ENCODE measurements at regions of chr11 and their contacts with region 1.

Region 1: DNA sequence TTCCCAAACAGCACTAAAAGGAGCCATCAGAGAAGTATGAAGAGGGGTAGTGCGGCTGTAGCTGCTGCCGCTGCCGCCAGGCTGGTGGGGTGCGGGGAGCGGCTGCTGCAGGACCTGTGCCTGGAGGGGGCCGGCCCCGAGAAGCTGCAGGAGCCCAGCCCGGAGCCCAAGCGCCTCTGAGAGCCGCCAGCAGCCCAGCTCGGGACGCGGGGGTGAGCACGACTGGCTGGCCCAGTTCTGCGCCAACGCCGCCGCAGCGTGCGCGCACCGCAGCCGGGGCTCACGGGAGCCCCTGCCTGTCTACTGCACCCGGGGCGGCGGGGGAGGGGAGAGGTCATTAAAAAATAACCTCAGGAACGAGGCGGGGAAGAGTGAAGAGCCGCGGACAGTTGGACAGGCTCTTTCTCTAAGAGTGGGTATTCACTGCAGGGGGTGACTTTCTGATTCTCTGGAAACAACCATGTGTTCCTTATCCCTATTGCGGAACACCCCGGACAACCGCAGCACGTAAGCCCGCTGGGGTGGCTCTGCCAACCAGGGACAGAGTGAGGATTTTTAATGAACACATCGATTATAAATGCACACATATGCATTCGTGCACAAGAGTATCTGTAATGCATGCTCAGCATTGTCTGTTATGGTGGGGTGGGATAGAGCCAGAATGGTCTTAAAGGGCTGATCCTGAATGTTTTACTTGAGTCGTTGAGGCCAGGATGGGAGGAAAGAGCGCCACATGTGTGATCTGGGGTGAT is 453 bp downstream of the GAS2 start:
- DNase-seq: peak; percentile 61
- H3K4me3 Mint-ChIP-seq: peak overlapping the region; percentile 84
- H3K27ac Mint-ChIP-seq: no peak overlapping the region
- H3K4me1 Mint-ChIP-seq: peaks cover 12% of the 10 kb centered on the region
- H3K27me3 Mint-ChIP-seq: peaks cover 46% of the 10 kb centered on the region

Region 2: DNA sequence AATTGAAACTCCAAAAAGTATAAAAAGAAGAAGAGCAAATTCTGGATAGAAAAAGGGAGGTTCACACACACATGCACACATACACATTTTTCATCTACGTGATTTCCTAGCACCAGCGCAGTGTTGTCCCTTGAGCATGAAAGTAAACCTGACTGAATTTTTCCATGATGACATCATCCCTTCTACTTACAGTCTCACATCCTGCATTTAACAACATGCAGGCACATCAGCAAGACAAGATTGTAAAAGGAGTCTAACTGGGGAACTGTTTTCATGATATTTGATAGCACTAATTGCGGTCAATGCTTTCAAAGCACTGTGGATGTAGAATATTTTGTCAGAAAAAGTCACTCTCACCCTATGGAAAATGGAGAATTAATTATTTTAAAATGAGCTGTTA is 36.2 kb after region 1 on chr11:
- intact Hi-C with region 1: loop called (anchors 5 kb)
- DNase-seq: peak; percentile 67
- H3K4me3 Mint-ChIP-seq: peak overlapping the region; percentile 37
- H3K27ac Mint-ChIP-seq: peak overlapping the region; percentile 79
- H3K4me1 Mint-ChIP-seq: peaks cover 11% of the 10 kb centered on the region
- H3K27me3 Mint-ChIP-seq: no peaks in the 10 kb centered on the region

Region 3: GRCh38 chr11:22730319-22730718 is 63.5 kb after region 1 on chr11:
- intact Hi-C with region 1: loop called (anchors 1 kb)
- DNase-seq: no peak
- H3K4me3 Mint-ChIP-seq: no peak overlapping the region
- H3K27ac Mint-ChIP-seq: no peak overlapping the region
- H3K4me1 Mint-ChIP-seq: no peaks in the 10 kb centered on the region
- H3K27me3 Mint-ChIP-seq: no peaks in the 10 kb centered on the region

Region 4: DNA sequence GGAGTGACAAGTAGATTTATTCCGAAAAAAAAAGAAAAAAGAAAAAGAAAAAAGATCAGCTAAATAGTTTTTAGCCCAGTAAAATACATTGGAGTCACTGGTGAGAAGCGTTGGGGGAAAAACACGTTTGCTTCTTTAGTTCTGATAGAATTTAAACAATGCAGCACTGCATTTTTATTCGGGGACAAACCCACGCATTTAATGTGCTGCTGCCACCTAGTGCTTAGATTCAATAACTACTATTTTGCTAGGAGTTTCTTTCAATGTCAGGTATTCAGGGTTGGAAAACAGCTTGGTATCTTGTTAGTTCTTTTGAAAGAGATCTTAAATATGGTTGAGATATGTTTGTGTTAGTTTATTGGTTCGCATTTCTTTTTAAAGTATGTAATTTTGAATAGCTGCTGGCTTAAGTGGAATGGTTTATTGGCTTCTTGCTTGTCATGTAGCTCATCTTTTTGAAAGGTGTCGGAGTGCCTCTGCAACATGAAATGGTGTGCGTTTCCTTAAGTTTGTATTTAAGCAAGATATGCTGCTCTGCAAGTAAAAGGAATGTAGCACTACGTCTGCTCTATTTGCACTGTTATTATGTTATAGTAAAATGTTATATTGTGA is 120.8 kb after region 1 on chr11:
- intact Hi-C with region 1: loop called (anchors 2 kb)
- DNase-seq: peak; percentile 78
- H3K4me3 Mint-ChIP-seq: no peak overlapping the region
- H3K27ac Mint-ChIP-seq: no peak overlapping the region
- H3K4me1 Mint-ChIP-seq: no peaks in the 10 kb centered on the region
- H3K27me3 Mint-ChIP-seq: peaks cover 2% of the 10 kb centered on the region

Measured in activated CD4-positive, alpha-beta T cell treated with anti-CD3 and anti-CD28 coated beads, Interleukin-2, amount 10 ng/mL, durations not matched to agents 24 days and 14 days (primary cell).